Esophagus squamous epithelium (tissue), 5 donors: ENCODE measurements at regions of chr2 and their contacts with region 1.

Region 1: DNA sequence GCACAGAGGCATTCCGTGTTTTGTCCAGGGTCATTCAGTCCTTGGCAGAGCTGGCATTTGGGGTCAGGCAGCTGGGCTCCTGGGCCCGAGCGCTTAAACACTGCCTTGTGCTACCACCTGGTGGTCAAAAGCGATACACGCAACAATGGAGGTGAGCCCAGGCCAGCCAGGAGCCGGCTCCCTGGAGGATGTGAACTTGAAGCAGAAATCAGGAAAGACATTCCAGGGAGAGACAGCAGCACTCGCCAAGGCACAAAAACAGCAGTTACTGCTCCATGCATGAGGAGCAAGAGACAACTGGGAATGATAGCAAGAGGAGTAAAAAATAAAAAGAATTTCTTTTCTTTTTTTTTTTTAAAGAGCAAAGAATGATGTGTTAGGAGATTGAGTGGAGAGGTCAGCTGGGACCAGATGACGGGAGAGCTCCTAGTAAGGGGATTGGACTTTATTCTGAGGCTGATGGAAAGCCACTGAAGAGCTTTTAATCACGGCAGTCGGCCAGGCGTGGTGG is 20.7 kb downstream of the SCYGR8 start:
- DNase-seq: no peak
- H3K4me3 ChIP-seq: no peak overlapping the region
- H3K27ac ChIP-seq: no peak overlapping the region
- H3K4me1 ChIP-seq: peaks cover 0 to 9% (median 4%) of the 10 kb centered on the region in 3 donors
- H3K27me3 ChIP-seq: no peaks in the 10 kb centered on the region
- CTCF ChIP-seq: peak; percentile 73 to 91 (median 84)
- POLR2A ChIP-seq: no peak

Region 2: GRCh38 chr2:227406177-227407031 is 360.0 kb before region 1 on chr2:
- intact Hi-C with region 1: loop called (anchors 10 kb)
- DNase-seq: no peak
- H3K4me3 ChIP-seq: peak overlapping the region in 1 of 4 donors; percentile 9
- H3K27ac ChIP-seq: peak overlapping the region; percentile 68 to 85 (median 77)
- H3K4me1 ChIP-seq: peaks cover 13 to 56% (median 23%) of the 10 kb centered on the region in 3 donors
- H3K27me3 ChIP-seq: no peaks in the 10 kb centered on the region
- CTCF ChIP-seq: peak in 5 of 6 experiments; percentile 45 to 80 (median 56)
- POLR2A ChIP-seq: no peak

Region 3: GRCh38 chr2:227608561-227609338 is 157.7 kb before region 1 on chr2:
- intact Hi-C with region 1: no loop called
- DNase-seq: no peak
- H3K4me3 ChIP-seq: no peak overlapping the region
- H3K27ac ChIP-seq: no peak overlapping the region
- H3K4me1 ChIP-seq: no peaks in the 10 kb centered on the region
- H3K27me3 ChIP-seq: peaks cover 0 to 5% (median 0%) of the 10 kb centered on the region in 4 donors
- CTCF ChIP-seq: no peak
- POLR2A ChIP-seq: no peak

Region 4: GRCh38 chr2:227655454-227655853 is 111.0 kb before region 1 on chr2:
- intact Hi-C with region 1: loop called (anchors 5 kb)
- DNase-seq: no peak
- H3K4me3 ChIP-seq: no peak overlapping the region
- H3K27ac ChIP-seq: no peak overlapping the region
- H3K4me1 ChIP-seq: peaks cover 0 to 6% (median 0%) of the 10 kb centered on the region in 3 donors
- H3K27me3 ChIP-seq: no peaks in the 10 kb centered on the region
- CTCF ChIP-seq: no peak
- POLR2A ChIP-seq: no peak

Region 5: DNA sequence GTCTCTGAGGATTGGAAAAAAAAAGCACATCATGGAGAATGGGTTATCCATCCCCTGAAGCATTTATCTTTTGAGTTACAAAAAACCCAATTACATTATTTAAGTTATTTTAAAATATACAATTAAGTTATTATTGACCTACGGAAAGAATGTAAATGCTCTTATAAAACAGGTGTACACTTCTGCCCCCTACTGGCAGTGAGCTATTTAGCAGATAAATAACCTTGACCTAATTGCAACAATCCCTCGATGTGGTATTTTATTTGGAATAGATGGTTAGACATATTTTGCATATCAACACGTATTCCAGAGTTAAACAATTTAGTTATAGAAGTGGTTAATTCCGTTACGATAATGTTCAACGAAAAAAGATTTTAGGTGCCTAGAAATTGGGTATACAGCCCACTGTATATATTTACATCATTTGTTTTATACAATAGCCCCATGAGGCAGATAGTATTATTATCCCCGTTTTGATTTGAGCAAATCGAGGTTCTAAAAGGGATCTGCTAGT is 95.9 kb after region 1 on chr2:
- intact Hi-C with region 1: loop called (anchors 10 kb)
- DNase-seq: no peak
- H3K4me3 ChIP-seq: no peak overlapping the region
- H3K27ac ChIP-seq: peak overlapping the region in 2 of 4 donors; percentile 48 to 58
- H3K4me1 ChIP-seq: peaks cover 0 to 43% (median 12%) of the 10 kb centered on the region in 3 donors
- H3K27me3 ChIP-seq: no peaks in the 10 kb centered on the region
- CTCF ChIP-seq: peak in 5 of 6 experiments; percentile 52 to 87 (median 73)
- POLR2A ChIP-seq: no peak